ENCODE measurements at regions of chr6 and their contacts with region 1.

Region 1: GRCh38 chr6:166106076-166106686 is 61.5 kb downstream of the TBXT start:
- DNase-seq: peak; percentile 68
- H3K4me3 ChIP-seq: no peak overlapping the region
- H3K27ac ChIP-seq: no peak overlapping the region
- H3K4me1 ChIP-seq: no peaks in the 10 kb centered on the region
- H3K27me3 ChIP-seq: no peaks in the 10 kb centered on the region
- CTCF ChIP-seq: peak; percentile 84

Region 2: GRCh38 chr6:165729307-165729936 is 376.8 kb before region 1 on chr6:
- intact Hi-C with region 1: loop called (anchors 10 kb)
- DNase-seq: peak; percentile 54
- H3K4me3 ChIP-seq: no peak overlapping the region
- H3K27ac ChIP-seq: no peak overlapping the region
- H3K4me1 ChIP-seq: no peaks in the 10 kb centered on the region
- H3K27me3 ChIP-seq: no peaks in the 10 kb centered on the region
- CTCF ChIP-seq: peak; percentile 77

Region 3: GRCh38 chr6:165884813-165885765 is 221.1 kb before region 1 on chr6:
- intact Hi-C with region 1: loop called (anchors 2 kb)
- DNase-seq: peak; percentile 71
- H3K4me3 ChIP-seq: no peak overlapping the region
- H3K27ac ChIP-seq: no peak overlapping the region
- H3K4me1 ChIP-seq: no peaks in the 10 kb centered on the region
- H3K27me3 ChIP-seq: no peaks in the 10 kb centered on the region
- CTCF ChIP-seq: peak; percentile 83

Measured in colonic mucosa (tissue), 4 donors.